Vagina (tissue), 2 donors: ENCODE measurements at regions of chr1 and their contacts with region 1.

Region 1: DNA sequence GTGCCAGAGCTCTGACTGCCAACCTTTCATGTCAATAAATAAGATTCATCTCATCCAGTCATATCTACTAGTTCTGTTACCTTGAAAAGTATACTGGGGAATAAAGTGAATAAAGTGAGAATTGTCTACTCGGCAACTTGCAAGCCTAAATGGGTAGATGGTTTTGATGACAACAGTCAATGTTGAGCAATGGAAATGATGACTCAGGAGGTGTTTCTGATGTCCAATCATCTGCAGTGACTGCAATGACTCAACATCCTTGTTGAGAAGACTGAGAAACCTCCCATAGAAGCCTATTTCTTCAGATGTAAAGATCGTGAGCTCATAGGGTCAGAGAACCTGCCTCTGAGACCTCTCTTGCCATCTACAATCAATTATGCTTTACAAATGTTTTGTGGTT is 276.4 kb downstream of the SPATA17 start:
- DNase-seq: no peak
- H3K4me3 ChIP-seq: no peak overlapping the region
- H3K27ac ChIP-seq: no peak overlapping the region
- H3K4me1 ChIP-seq: no peaks in the 10 kb centered on the region
- H3K27me3 ChIP-seq: no peaks in the 10 kb centered on the region
- CTCF ChIP-seq: no peak
- POLR2A ChIP-seq: no peak

Region 2: DNA sequence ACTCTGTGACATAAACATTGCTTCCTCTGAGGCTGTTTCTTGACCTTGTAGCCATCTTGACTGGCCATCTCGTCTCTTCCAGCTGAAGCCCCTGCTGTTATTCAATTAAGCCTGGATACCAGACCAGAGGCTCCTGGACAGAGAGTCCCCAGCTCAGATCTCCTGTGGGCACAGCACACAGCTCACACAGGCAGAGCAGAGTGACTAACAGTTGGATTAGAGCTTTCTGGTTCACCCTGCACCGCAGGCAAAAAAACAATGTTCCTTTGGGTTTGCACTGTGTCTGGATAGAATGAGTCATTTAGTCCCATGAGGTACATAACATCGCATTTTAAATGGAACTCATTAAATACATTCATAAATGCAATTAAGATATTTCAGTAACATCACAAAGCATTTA is 1450.8 kb before region 1 on chr1:
- intact Hi-C with region 1: no loop called
- DNase-seq: no peak
- H3K4me3 ChIP-seq: no peak overlapping the region
- H3K27ac ChIP-seq: no peak overlapping the region
- H3K4me1 ChIP-seq: no peaks in the 10 kb centered on the region
- H3K27me3 ChIP-seq: no peaks in the 10 kb centered on the region
- CTCF ChIP-seq: no peak
- POLR2A ChIP-seq: no peak

Region 3: DNA sequence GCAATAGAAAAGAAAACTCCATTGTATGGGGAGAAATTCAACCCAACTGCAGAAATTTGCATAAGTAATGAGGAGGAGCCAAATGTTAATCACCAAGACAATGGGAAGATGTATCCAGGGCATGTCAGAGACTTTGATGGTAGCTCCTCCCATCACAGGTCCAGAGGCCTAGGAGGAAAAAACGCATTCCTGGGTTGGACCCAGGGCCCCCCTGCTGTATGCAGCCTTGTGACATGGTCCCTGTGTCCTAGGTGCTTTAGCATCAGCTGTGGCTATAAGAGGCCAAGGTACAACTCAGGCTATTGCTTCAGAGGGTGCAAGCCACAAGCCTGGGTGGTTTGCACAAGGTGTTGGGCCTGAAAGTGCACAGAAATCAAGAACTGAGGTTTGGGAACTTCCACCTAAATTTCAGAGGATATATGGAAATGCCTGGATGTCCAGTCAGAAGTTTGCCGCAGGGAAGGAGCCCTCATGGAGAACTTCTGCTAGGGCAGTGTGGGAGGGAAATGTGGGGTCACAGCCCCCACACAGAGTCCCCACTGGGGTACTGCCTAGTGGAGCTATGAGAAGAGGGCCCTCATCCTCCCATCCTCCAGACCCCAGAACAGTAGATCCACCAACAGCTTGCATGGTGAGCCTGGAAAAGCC is 600.0 kb after region 1 on chr1:
- intact Hi-C with region 1: loop called (anchors 5 kb)
- DNase-seq: no peak
- H3K4me3 ChIP-seq: no peak overlapping the region
- H3K27ac ChIP-seq: no peak overlapping the region
- H3K4me1 ChIP-seq: no peaks in the 10 kb centered on the region
- H3K27me3 ChIP-seq: no peaks in the 10 kb centered on the region
- CTCF ChIP-seq: no peak
- POLR2A ChIP-seq: no peak